GM10248 (cell line): ENCODE measurements at regions of chr12 and their contacts with region 1.

Region 1: GRCh38 chr12:53492830-53493611 is 6.2 kb downstream of the MAP3K12 start:
- DNase-seq: peak; percentile 93
- CTCF ChIP-seq: no peak

Region 2: DNA sequence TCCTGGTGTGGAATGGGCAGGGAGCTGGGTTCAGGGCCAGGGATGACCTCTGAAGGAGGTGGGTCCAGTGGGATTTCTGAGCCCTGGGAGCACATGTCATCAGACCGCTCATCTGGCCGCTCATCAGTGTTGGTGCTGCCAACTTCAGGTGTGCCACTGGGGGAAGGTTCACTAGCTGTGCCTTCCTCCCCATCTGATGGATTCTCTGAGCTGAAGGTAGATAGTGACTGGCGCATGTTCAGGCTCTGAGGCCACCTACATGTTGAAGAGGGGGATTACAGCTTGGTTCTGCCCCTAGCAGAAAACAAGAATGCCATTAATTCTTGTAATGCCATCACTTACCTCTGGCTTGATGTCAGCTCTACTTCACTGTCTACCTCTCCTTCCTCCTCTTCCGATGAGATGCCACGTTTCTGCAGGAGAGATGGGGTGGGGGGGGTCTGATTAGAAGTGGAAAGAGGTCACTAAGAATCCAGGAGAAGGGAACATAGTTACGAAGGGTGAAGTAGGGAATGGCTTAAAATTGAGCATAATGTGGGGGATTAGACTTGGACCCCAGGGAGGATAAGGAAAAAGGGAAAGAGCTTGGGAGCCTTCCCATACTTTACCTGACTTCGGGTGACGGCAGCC is 10.9 kb before region 1 on chr12:
- CTCF ChIA-PET with region 1: interaction called, 18 read pairs
- POLR2A ChIA-PET with region 1: interaction called, 12 read pairs
- DNase-seq: no peak
- CTCF ChIP-seq: no peak

Region 3: DNA sequence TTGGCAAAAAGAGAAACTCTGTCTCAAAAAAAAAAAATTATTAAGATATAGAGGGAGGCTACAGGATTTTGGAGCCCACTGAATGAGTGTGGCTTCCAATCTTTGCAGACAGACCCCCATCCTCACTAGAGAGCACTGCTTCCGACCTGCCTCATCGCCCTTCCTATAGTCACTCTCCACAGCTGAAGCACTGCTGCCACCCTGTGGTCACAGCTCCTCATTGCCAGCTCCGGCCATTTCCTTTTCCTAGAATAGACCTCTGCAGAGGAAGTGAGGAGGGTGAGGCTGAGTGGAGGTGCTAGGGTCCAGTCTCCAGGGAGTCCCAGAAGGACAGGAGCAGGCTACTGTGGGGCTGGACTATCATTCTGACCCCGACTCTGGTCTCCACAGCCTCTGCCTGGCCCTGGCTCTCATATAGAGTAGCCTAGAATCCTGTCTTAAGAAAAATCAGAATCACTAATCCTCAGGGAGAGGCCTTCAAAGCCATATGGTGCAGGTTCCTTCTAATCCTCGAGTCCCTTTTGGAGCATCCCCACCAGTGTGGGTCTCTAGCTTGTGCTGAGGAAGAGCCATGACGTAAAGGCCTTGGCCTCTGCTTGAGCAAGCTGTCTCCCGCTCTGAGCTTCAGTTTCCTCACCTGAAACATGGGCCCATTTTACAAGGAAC is 15.6 kb after region 1 on chr12:
- CTCF ChIA-PET with region 1: interaction called, 43 read pairs
- POLR2A ChIA-PET with region 1: no interaction called
- DNase-seq: peak; percentile 82
- CTCF ChIP-seq: peak; percentile 99

Region 4: DNA sequence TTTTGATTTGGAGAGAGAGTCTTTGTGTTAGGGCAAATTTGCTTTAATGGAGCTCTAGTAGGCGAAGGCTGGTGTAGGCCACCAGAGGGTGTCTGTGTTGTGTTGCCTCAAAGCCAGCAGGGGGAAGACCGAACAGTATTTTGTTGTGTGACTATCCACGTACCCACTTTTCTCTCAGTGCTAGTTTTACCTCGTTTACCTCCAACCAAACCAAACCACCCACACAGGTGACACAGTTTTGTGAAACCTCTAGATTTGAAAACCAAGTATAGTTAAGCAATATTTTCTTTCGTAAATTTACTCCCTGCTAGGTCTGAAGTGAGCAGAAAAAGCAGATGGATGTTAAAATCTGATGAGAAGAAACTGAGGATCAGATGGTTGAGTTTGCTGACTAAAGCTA is 50.5 kb after region 1 on chr12:
- CTCF ChIA-PET with region 1: no interaction called
- POLR2A ChIA-PET with region 1: no interaction called
- DNase-seq: peak; percentile 78
- CTCF ChIP-seq: peak; percentile 75